Left ventricle myocardium inferior (tissue), 1 donor: ENCODE measurements at regions of chr9 and their contacts with region 1.

Region 1: GRCh38 chr9:129343424-129344375 is 165.6 kb upstream of the IER5L start:
- DNase-seq: peak; percentile 70
- H3K4me3 ChIP-seq: no peak overlapping the region
- H3K27ac ChIP-seq: peak overlapping the region; percentile 54
- H3K4me1 ChIP-seq: peaks cover 17% of the 10 kb centered on the region
- H3K27me3 ChIP-seq: no peaks in the 10 kb centered on the region
- CTCF ChIP-seq: no peak

Region 2: GRCh38 chr9:129021081-129021480 is 322.6 kb before region 1 on chr9:
- intact Hi-C with region 1: no loop called
- DNase-seq: no peak
- H3K4me3 ChIP-seq: no peak overlapping the region
- H3K27ac ChIP-seq: no peak overlapping the region
- H3K4me1 ChIP-seq: peaks cover 3% of the 10 kb centered on the region
- H3K27me3 ChIP-seq: no peaks in the 10 kb centered on the region
- CTCF ChIP-seq: no peak

Region 3: DNA sequence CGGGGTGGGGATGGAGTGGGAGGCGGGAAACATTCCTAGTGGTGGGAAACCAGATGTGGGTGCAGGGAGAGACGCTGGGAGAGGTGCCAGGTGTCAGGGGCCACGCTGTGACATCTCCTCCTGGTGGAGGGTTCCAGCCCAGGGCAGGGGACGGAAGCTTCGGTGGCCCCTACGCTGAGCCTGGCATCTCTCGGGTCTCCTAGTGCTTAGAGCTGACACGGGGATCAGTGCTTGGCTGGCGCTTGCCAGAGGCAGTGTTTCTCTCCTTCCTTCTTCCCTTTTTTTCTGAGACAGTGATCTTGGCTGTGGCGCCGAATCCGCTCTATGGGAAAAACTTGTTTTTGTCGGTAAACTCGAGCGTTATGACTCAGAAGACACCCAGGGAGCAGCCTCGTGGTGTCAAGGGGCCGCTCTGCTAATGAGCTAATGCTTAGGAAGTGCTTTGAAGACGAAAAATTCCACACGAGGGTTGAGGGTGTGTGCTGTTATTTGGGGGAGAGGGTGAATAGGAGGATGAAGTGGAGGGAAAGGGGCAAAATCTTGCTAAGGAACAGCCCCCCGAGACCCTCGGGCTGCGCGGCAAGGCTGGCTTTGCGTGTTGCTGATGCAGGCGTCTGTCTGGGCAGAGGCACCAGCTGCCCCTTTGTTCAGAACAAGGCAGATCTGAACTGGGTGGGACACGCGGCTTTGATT is 145.2 kb before region 1 on chr9:
- intact Hi-C with region 1: loop called (anchors 10 kb)
- DNase-seq: peak; percentile 59
- H3K4me3 ChIP-seq: peak overlapping the region; percentile 29
- H3K27ac ChIP-seq: peak overlapping the region; percentile 81
- H3K4me1 ChIP-seq: peaks cover 23% of the 10 kb centered on the region
- H3K27me3 ChIP-seq: peaks cover 22% of the 10 kb centered on the region
- CTCF ChIP-seq: no peak

Region 4: DNA sequence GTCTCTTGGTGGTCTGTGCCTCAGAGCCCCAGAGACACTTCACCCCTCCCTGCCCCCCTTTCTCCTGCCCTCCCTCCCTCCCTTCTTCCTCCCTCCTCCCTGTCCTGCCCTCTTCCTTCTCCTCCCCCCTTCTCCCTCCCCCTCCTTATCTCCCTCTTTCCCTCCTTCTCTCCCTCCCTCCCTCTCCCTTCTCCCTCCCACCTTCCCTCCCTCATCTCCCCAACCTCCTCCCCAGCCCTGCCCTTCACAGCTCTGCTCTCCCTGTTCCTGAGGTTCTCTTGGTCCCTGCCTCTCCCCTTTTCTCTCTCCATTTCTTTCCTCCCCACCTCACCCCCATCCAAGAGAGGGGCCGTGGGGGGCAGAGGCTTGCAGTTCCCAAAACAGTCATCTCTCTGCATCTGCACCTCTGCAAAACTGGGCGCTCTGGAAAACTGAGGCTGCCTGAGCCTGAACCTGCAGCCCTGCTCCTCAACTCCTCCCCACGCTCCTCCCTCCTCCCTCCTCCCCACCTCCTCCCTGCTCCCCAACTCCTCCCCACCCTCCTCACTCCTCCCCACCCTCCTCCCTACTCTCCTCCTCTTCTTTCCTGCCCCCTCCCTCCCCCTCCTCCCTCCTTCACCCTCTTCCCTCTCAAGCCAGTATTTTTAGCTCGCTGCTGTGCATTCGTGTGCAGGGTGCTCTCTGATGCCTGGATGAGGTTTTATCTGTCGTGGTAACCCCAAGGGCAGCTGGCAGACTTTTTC is 58.1 kb after region 1 on chr9:
- intact Hi-C with region 1: no loop called
- DNase-seq: peak; percentile 35
- H3K4me3 ChIP-seq: peak overlapping the region; percentile 29
- H3K27ac ChIP-seq: peak overlapping the region; percentile 78
- H3K4me1 ChIP-seq: peaks cover 39% of the 10 kb centered on the region
- H3K27me3 ChIP-seq: no peaks in the 10 kb centered on the region
- CTCF ChIP-seq: no peak